ENCODE measurements at regions of chr4 and their contacts with region 1.

Region 1: GRCh38 chr4:6873792-6874461 is 35.7 kb upstream of the TBC1D14 start:
- DNase-seq: peak; percentile 52 to 73 (median 68)
- H3K4me3 ChIP-seq: no peak overlapping the region
- H3K27ac ChIP-seq: no peak overlapping the region
- H3K4me1 ChIP-seq: peaks cover 4 to 35% (median 17%) of the 10 kb centered on the region in 4 experiments
- H3K27me3 ChIP-seq: no peaks in the 10 kb centered on the region

Region 2: DNA sequence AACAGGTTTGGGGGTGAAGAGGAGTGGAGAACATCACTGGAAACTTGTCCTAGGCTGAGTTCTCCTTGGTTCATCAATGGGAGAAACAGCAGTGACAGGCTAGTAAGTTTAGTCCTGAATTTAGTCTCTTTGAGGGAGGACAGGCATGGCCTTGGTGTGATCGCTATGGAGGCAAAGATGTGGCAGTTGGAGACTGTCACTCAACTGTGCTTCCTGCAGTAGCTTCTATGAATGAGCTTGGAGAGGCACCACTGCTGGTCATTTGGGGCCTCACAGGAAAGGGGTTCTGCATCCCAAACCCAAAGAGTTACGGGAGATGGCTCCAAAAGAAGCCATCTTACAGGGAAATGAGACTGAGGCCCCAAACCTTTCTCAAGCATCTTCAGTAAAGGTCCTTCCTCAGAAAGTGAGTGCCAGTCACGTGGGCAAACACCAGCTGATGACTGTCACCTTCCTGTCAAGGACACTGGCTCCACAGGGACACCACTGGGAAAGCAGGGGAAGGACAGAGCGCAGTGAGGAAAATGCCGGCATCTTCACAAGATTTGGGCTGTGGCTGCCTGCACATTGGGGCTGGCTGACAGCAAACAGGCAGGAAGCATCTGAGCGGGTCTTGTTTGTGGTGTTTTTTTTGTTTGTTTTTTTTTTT is 226.2 kb before region 1 on chr4:
- CTCF ChIA-PET with region 1: no interaction called
- POLR2A ChIA-PET with region 1: no interaction called
- DNase-seq: no peak
- H3K4me3 ChIP-seq: no peak overlapping the region
- H3K27ac ChIP-seq: no peak overlapping the region
- H3K4me1 ChIP-seq: peaks cover 0 to 5% (median 2%) of the 10 kb centered on the region in 4 experiments
- H3K27me3 ChIP-seq: no peaks in the 10 kb centered on the region

Region 3: GRCh38 chr4:6716018-6716911 is 157.7 kb before region 1 on chr4 and contains the start of gene BLOC1S4:
- CTCF ChIA-PET with region 1: interaction called, 84 read pairs
- POLR2A ChIA-PET with region 1: no interaction called
- DNase-seq: peak; percentile 93 to 96 (median 95)
- H3K4me3 ChIP-seq: peak within 1 kb of the TSS; percentile 50 to 88 (median 73)
- H3K27ac ChIP-seq: peak within 1 kb of the TSS in 1 of 2 experiments; percentile 75
- H3K4me1 ChIP-seq: peaks cover 13 to 25% (median 18%) of the 10 kb centered on the region in 4 experiments
- H3K27me3 ChIP-seq: peaks cover 0 to 2% (median 0%) of the 10 kb centered on the region in 5 experiments

Region 4: GRCh38 chr4:6768539-6768905 is 105.4 kb before region 1 on chr4:
- CTCF ChIA-PET with region 1: interaction called, 14 read pairs
- POLR2A ChIA-PET with region 1: no interaction called
- DNase-seq: peak in 2 of 3 donors; percentile 58
- H3K4me3 ChIP-seq: no peak overlapping the region
- H3K27ac ChIP-seq: no peak overlapping the region
- H3K4me1 ChIP-seq: peaks cover 0 to 12% (median 1%) of the 10 kb centered on the region in 4 experiments
- H3K27me3 ChIP-seq: peaks cover 0 to 2% (median 0%) of the 10 kb centered on the region in 5 experiments

Region 5: GRCh38 chr4:6783053-6783981 is 90.6 kb before region 1 on chr4:
- CTCF ChIA-PET with region 1: interaction called, 25 read pairs
- POLR2A ChIA-PET with region 1: no interaction called
- DNase-seq: peak; percentile 86 to 91 (median 89)
- H3K4me3 ChIP-seq: peak overlapping the region; percentile 72 to 90 (median 86)
- H3K27ac ChIP-seq: peak overlapping the region; percentile 85 to 95
- H3K4me1 ChIP-seq: peaks cover 6 to 28% (median 12%) of the 10 kb centered on the region in 4 experiments
- H3K27me3 ChIP-seq: no peaks in the 10 kb centered on the region

Region 6: DNA sequence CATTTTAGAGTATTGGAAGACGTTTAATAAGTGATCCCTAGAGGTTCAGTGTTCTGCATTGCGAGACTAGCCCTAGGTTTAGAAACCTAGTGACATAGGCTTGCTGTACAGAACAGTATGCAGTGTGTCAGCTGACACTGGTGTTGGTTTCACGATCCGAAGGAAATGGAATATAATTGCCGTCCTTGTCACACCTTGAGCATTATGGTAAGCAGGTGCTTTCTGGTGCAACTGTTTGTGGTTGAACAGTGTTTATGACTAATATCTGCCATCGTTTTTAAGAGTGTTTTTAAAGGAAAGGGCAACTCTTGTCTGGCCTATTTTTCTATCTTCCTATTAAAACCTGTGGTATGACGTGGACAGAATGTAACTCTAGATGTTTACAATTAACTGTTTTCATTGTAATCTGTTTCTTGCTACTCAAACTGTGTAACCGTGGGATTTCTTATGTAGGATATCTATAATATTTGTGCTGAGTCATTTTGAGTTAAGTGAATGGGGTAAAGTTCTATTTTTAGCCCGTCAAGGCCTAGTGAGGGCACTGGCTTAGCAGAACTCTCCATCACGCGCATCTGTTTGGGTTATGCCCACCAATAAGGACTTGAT is 18.1 kb before region 1 on chr4:
- CTCF ChIA-PET with region 1: interaction called, 27 read pairs
- POLR2A ChIA-PET with region 1: no interaction called
- DNase-seq: peak; percentile 16 to 80 (median 64)
- H3K4me3 ChIP-seq: peak overlapping the region in 2 of 7 experiments; percentile 18 to 33
- H3K27ac ChIP-seq: no peak overlapping the region
- H3K4me1 ChIP-seq: peaks cover 0 to 26% (median 11%) of the 10 kb centered on the region in 4 experiments
- H3K27me3 ChIP-seq: no peaks in the 10 kb centered on the region

Region 7: DNA sequence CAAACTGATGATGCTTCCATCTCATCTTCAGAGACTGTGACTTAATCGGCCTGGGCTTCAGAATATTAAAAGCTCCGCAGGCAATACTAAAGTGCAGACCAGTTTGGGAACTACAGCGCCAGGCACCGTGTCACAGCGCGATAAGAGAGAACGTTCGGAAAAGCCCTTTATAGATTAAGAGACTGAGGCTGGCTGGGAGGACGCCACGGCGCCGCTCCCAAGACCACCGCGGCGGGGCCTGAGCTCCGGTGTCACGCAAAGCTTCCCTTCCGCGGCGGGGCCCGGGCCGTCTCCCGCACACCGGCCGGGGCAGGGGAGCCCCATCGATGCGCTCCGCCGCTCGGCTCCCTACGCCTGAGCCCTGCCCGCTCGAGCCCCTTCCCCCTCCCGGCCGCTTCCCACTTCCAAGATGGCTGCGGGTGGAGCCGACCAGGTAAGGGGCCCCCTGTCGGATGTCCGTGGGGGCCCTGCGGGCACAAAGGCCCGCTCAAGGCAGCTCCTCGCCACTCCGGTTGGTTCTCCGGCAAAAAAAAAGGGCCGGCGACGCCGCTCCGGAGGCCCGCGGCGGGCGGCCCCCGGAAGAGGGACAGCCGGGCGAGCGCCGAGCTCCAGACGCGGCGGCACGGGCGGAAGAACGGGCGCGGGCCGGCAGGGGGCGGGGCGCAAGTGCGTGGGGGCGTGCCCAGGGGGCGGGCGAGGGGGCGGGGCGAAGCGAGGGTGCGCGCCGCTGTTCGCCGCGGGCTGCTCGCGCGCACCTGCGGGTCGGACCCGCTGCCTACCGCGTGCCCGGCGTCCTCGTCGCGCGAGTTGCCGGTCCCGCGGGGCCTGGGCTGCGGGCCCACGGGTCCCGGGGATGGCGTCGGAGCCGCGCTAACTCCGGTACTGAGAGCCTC is 35.4 kb after region 1 on chr4 and contains the start of gene TBC1D14:
- CTCF ChIA-PET with region 1: interaction called, 14 read pairs
- POLR2A ChIA-PET with region 1: no interaction called
- DNase-seq: peak; percentile 87 to 91 (median 88)
- H3K4me3 ChIP-seq: peak within 1 kb of the TSS; percentile 71 to 91 (median 83)
- H3K27ac ChIP-seq: peak within 1 kb of the TSS; percentile 89 to 96
- H3K4me1 ChIP-seq: peaks cover 5 to 52% (median 44%) of the 10 kb centered on the region in 4 experiments
- H3K27me3 ChIP-seq: peaks cover 0 to 16% (median 4%) of the 10 kb centered on the region in 5 experiments

Measured in common myeloid progenitor, CD34-positive (primary cell).